ENCODE measurements at regions of chr15 and their contacts with region 1.

Region 1: GRCh38 chr15:52735231-52736089 is 54.7 kb downstream of the ONECUT1 start:
- H3K4me3 Mint-ChIP-seq: no peak overlapping the region
- H3K27ac Mint-ChIP-seq: no peak overlapping the region
- H3K4me1 Mint-ChIP-seq: peaks cover 12% of the 10 kb centered on the region
- H3K27me3 Mint-ChIP-seq: peaks cover 14% of the 10 kb centered on the region

Region 2: GRCh38 chr15:52256366-52256765 is 479.1 kb before region 1 on chr15:
- intact Hi-C with region 1: loop called (anchors 1 kb)
- H3K4me3 Mint-ChIP-seq: peak overlapping the region; percentile 8
- H3K27ac Mint-ChIP-seq: no peak overlapping the region
- H3K4me1 Mint-ChIP-seq: peaks cover 33% of the 10 kb centered on the region
- H3K27me3 Mint-ChIP-seq: no peaks in the 10 kb centered on the region

Region 3: GRCh38 chr15:52408823-52409222 is 326.6 kb before region 1 on chr15:
- intact Hi-C with region 1: loop called (anchors 10 kb)
- H3K4me3 Mint-ChIP-seq: no peak overlapping the region
- H3K27ac Mint-ChIP-seq: no peak overlapping the region
- H3K4me1 Mint-ChIP-seq: no peaks in the 10 kb centered on the region
- H3K27me3 Mint-ChIP-seq: no peaks in the 10 kb centered on the region

Region 4: GRCh38 chr15:52679232-52680040 is 56.0 kb before region 1 on chr15 and contains the start of gene ATOSA:
- intact Hi-C with region 1: loop called (anchors 2 kb)
- H3K4me3 Mint-ChIP-seq: peak within 1 kb of the TSS; percentile 98
- H3K27ac Mint-ChIP-seq: peak within 1 kb of the TSS; percentile 98
- H3K4me1 Mint-ChIP-seq: peaks cover 25% of the 10 kb centered on the region
- H3K27me3 Mint-ChIP-seq: peaks cover 11% of the 10 kb centered on the region